WTC11 (cell line): ENCODE measurements at regions of chr2 and their contacts with region 1.

Region 1: GRCh38 chr2:231612179-231613053 is 19.8 kb downstream of the TEX44 start:
- DNase-seq: peak; percentile 96
- ATAC-seq: peak; percentile 41
- H3K4me3 Mint-ChIP-seq: peak overlapping the region; percentile 77
- H3K27ac Mint-ChIP-seq: peak overlapping the region; percentile 100
- H3K4me1 Mint-ChIP-seq: peaks cover 58% of the 10 kb centered on the region
- H3K27me3 Mint-ChIP-seq: peaks cover 2% of the 10 kb centered on the region; the same call in 1 of the 2 replicates
- CTCF ChIP-seq: peak; percentile 99

Region 2: GRCh38 chr2:231399853-231400680 is 212.3 kb before region 1 on chr2:
- CTCF ChIA-PET with region 1: no interaction called
- POLR2A ChIA-PET with region 1: no interaction called
- DNase-seq: no peak
- ATAC-seq: peak; percentile 16
- H3K4me3 Mint-ChIP-seq: no peak overlapping the region
- H3K27ac Mint-ChIP-seq: peak overlapping the region; percentile 86
- H3K4me1 Mint-ChIP-seq: peaks cover 71% of the 10 kb centered on the region
- H3K27me3 Mint-ChIP-seq: no peaks in the 10 kb centered on the region
- CTCF ChIP-seq: no peak

Region 3: DNA sequence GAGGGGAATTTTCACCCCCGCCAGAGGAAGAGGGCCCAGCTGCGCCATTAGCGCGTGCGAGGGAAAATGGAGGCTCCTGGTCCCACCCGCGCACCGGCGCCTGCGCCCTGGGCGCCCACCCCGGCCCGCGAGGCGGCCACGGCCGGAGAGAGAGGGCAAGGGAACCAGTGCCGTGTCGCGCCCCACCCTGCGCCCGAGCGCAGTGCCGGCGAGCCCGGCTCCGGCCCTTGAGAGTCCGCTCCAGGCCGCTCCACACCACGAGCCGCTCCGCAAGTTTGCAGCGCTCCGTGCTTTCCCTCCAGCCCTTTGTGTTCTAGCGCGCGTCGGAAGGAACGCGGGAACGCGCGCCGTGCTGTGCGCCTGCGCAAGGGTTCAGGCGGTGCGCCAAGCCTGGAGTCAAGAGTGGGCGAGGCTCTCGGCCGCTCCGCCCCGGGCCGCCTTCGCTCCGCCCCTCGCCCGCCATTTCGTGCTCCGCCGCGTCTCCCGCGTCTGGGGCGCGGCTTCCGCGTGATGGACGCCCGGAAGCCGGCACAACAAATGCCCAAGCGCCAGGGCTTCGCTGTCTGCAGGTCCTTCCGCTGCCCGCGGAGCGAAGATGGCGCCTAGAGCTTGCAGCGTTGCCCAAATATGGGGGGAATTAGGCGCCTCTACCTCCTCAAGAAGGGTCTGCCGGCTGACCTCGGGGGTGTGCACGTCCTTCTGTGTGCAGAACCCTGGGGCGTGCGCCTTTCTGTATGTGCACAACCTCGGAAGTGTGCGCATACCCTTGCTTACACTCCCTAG is 49.8 kb after region 1 on chr2:
- CTCF ChIA-PET with region 1: interaction called, 30 read pairs
- POLR2A ChIA-PET with region 1: interaction called, 30 read pairs
- DNase-seq: peak; percentile 98
- ATAC-seq: peak; percentile 67
- H3K4me3 Mint-ChIP-seq: peak overlapping the region; percentile 60
- H3K27ac Mint-ChIP-seq: peak overlapping the region; percentile 94
- H3K4me1 Mint-ChIP-seq: peaks cover 44% of the 10 kb centered on the region
- H3K27me3 Mint-ChIP-seq: peaks cover 20% of the 10 kb centered on the region
- CTCF ChIP-seq: no peak

Region 4: GRCh38 chr2:231680992-231681853 is 68.8 kb after region 1 on chr2:
- CTCF ChIA-PET with region 1: interaction called, 36 read pairs
- POLR2A ChIA-PET with region 1: interaction called, 145 read pairs
- DNase-seq: peak; percentile 94
- ATAC-seq: peak; percentile 75
- H3K4me3 Mint-ChIP-seq: peak overlapping the region; percentile 86
- H3K27ac Mint-ChIP-seq: peak overlapping the region; percentile 99
- H3K4me1 Mint-ChIP-seq: peaks cover 41% of the 10 kb centered on the region
- H3K27me3 Mint-ChIP-seq: no peaks in the 10 kb centered on the region
- CTCF ChIP-seq: no peak

Region 5: DNA sequence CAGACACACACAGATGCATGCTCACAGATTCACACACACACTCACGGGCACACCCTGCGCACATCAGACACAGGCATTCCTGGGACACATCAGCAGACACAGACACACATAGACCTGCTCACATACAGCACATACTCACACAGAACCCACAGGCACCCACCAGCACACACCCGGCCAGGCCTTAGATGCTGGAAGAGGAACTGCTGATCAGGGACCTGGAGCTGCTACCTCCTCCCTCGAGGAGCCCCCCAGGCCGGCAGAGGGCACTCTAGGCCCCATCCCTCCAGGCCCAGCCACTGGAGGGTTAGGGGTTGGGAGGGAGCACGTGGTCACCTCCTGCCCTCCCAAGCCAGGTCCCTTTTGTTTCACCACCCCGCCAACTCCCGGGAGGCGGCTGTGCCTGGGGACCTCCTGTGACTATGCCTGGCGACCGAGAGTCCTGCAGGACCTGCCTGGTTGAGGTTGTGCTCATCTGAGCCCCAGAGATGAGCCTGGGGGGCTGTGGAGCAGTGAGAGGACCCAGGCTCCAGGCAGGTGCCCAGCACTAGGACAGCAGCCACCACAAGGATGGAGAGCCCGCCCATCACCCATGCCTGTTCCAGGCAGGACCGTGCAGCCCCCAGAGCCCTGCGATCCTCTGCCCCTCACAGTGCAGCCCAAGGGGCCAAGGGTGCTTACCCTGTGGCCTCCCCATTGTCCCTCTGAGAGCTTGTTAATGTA is 74.9 kb after region 1 on chr2:
- CTCF ChIA-PET with region 1: interaction called, 10 read pairs
- POLR2A ChIA-PET with region 1: interaction called, 8 read pairs
- DNase-seq: peak; percentile 92
- ATAC-seq: peak; percentile 87
- H3K4me3 Mint-ChIP-seq: peak overlapping the region; percentile 64
- H3K27ac Mint-ChIP-seq: peak overlapping the region; percentile 61
- H3K4me1 Mint-ChIP-seq: peaks cover 49% of the 10 kb centered on the region
- H3K27me3 Mint-ChIP-seq: no peaks in the 10 kb centered on the region
- CTCF ChIP-seq: peak; percentile 33